ENCODE measurements at regions of chr4 and their contacts with region 1.

Region 1: GRCh38 chr4:55395529-55396307 is at the start of gene TMEM165:
- DNase-seq: peak; percentile 94
- ATAC-seq: peak; percentile 91
- H3K4me3 ChIP-seq: peak within 1 kb of the TSS; percentile 67 to 94 (median 77)
- H3K4me3 Mint-ChIP-seq: peak within 1 kb of the TSS; percentile 97
- H3K27ac ChIP-seq: peak within 1 kb of the TSS; percentile 91 to 93
- H3K27ac Mint-ChIP-seq: peak within 1 kb of the TSS; percentile 97
- H3K4me1 ChIP-seq: peaks cover 28 to 33% of the 10 kb centered on the region in 2 donors
- H3K4me1 Mint-ChIP-seq: peaks cover 39% of the 10 kb centered on the region
- H3K27me3 ChIP-seq: no peaks in the 10 kb centered on the region
- H3K27me3 Mint-ChIP-seq: no peaks in the 10 kb centered on the region
- CTCF ChIP-seq: no peak
- total RNA-seq, gene TMEM165: 110 and 113 TPM in 2 replicates

Region 2: DNA sequence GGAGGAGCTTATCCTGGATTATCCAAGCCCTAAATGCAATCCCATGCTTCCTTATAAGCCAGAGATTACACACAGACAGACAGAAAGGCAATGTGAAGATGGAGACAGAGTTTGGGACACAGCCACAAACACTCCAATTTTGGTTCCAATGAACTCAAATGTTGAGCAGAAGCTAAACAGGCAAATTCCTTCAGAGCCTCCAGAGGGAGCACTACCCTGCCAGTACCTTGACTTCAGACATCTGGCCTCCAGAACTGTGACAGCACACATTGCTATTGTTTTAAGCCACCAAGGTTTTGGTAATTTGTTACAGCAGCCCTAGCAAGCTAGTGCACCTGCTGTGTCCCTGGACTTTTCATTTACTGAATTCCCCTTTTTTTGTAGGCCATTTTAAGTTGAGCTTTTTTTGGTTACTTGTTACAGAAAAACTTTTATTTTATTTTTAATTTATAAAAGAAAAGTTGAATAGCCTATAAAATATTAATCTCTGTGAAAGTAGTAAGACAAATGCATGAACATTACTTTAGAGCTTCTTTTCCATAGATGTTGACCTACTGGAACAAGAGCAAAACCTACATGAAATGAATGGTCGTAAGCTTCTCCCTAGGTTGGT is 83.1 kb before region 1 on chr4:
- CTCF ChIA-PET with region 1: no interaction called
- POLR2A ChIA-PET with region 1: no interaction called
- intact Hi-C with region 1: no loop called
- DNase-seq: peak; percentile 34
- ATAC-seq: peak; percentile 39
- H3K4me3 ChIP-seq: no peak overlapping the region
- H3K4me3 Mint-ChIP-seq: no peak overlapping the region
- H3K27ac ChIP-seq: no peak overlapping the region
- H3K27ac Mint-ChIP-seq: no peak overlapping the region
- H3K4me1 ChIP-seq: no peaks in the 10 kb centered on the region
- H3K4me1 Mint-ChIP-seq: no peaks in the 10 kb centered on the region
- H3K27me3 ChIP-seq: no peaks in the 10 kb centered on the region
- H3K27me3 Mint-ChIP-seq: peaks cover 17% of the 10 kb centered on the region
- CTCF ChIP-seq: peak; percentile 53

Region 3: DNA sequence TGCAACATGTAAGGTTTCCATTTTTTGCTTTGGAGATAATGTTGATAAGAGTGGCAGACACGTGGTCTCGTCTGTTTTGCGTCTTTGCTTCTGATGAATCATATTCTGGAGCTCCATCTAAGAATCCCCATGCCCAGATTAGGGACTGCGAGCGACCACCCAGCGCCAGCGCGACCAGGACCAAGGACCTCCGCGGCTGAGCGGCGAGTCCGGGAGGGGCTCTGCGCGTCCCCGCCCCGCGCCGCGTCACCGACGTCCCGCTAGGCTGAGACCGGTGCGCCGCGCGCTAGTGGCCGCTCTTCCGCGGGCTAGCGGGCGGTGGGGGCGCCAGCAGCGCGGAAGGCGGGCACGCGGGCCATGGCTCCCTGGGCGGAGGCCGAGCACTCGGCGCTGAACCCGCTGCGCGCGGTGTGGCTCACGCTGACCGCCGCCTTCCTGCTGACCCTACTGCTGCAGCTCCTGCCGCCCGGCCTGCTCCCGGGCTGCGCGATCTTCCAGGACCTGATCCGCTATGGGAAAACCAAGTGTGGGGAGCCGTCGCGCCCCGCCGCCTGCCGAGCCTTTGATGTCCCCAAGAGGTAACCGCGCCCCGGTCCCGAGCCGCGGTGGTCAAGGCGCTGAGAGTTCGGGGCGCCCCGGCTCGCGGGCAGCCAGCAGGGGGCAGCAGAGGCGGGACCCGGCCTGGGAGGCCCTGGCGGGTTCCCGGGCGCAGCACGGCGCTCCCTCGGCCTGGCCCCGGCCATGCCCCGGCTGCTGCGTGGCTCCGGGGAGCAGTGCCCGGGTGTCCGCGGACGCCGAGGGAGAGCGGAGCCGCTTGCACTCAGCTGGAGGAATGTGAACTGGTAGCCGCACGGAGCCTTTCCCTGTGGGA is 49.5 kb before region 1 on chr4 and contains the start of gene SRD5A3:
- CTCF ChIA-PET with region 1: interaction called, 29 read pairs
- POLR2A ChIA-PET with region 1: interaction called, 7 read pairs
- intact Hi-C with region 1: loop called (anchors 1 kb)
- DNase-seq: peak; percentile 85
- ATAC-seq: peak; percentile 89
- H3K4me3 ChIP-seq: peak within 1 kb of the TSS; percentile 56 to 84 (median 73)
- H3K4me3 Mint-ChIP-seq: peak within 1 kb of the TSS; percentile 85
- H3K27ac ChIP-seq: peak within 1 kb of the TSS; percentile 69 to 85
- H3K27ac Mint-ChIP-seq: peak within 1 kb of the TSS; percentile 94
- H3K4me1 ChIP-seq: peaks cover 4 to 9% of the 10 kb centered on the region in 2 donors
- H3K4me1 Mint-ChIP-seq: peaks cover 10% of the 10 kb centered on the region
- H3K27me3 ChIP-seq: no peaks in the 10 kb centered on the region
- H3K27me3 Mint-ChIP-seq: no peaks in the 10 kb centered on the region
- CTCF ChIP-seq: peak; percentile 99
- total RNA-seq, gene SRD5A3: 3.6 and 4.0 TPM in 2 replicates

Region 4: DNA sequence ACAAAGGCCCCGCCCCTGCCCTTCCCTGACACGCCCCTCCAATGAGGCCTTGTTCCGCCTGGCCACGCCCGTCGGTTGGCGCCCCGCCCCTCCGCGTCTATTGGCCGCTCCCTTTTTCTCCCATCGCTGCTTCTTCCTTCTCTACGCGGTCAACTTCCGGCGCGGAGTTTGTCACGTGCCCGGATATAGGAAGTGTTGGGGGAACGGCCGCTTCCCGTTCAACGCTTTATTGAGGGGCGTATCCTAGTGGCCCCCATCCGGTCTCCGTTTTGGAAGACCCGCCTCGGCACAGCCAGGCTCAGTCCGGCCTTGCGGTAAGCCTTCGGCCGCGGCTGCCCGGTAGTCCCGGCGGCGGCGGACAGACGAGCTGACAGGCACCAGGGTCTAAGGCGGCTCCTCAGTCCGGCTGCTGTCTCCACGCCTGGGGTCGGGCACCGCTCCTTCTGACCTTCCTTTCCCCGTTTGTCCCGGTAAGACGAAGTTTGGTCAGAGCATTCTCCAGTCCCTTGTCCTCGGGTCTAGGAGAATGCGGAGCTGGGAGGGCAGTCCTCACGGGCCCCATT is 457.8 kb after region 1 on chr4 and contains the start of gene EXOC1:
- CTCF ChIA-PET with region 1: no interaction called
- POLR2A ChIA-PET with region 1: interaction called, 3 read pairs
- intact Hi-C with region 1: loop called (anchors 1 kb)
- DNase-seq: peak; percentile 97
- ATAC-seq: peak; percentile 100
- H3K4me3 ChIP-seq: peak within 1 kb of the TSS; percentile 85 to 98 (median 97)
- H3K4me3 Mint-ChIP-seq: no peak within 1 kb of the TSS
- H3K27ac ChIP-seq: peak within 1 kb of the TSS; percentile 71 to 86
- H3K27ac Mint-ChIP-seq: peak within 1 kb of the TSS; percentile 94
- H3K4me1 ChIP-seq: peaks cover 11 to 12% of the 10 kb centered on the region in 2 donors
- H3K4me1 Mint-ChIP-seq: peaks cover 13% of the 10 kb centered on the region
- H3K27me3 ChIP-seq: peaks cover 0 to 14% (median 2%) of the 10 kb centered on the region in 4 experiments
- H3K27me3 Mint-ChIP-seq: peaks cover 12% of the 10 kb centered on the region
- CTCF ChIP-seq: no peak
- total RNA-seq, gene EXOC1: 42.5 and 46.7 TPM in 2 replicates

Region 5: DNA sequence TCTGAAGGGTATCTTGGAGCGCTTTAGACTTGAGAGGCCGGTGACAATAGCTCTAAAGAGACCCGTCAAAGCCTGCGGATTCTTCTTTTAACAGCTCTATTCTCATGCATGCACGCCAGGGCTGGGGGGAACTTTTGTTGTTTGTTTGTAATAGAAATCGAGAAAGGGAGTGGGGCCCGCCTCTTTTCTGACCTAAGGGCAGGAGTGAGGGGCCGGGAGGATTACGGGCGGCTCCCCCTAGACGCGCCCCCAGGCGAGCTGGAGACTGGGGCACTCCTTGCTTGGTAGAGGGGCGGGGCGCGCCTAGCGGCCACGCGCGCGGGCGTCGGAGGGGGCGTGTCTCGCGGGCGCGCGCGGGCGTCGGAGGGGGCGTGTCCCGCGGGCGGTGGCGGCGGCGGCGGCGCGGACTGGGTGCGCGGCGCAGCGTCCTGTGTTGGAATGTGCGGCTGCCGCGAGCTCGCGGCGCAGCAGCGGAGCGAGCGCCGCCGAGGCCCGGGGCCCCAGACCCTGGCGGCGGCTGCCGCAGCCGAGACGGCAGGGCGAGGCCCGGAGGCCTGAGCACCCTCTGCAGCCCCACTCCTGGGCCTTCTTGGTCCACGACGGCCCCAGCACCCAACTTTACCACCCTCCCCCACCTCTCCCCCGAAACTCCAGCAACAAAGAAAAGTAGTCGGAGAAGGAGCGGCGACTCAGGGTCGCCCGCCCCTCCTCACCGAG is 1511.9 kb after region 1 on chr4 and contains the start of gene REST:
- CTCF ChIA-PET with region 1: no interaction called
- POLR2A ChIA-PET with region 1: no interaction called
- intact Hi-C with region 1: loop called (anchors 5 kb)
- DNase-seq: peak; percentile 92
- ATAC-seq: peak; percentile 65
- H3K4me3 ChIP-seq: peak within 1 kb of the TSS; percentile 62 to 98 (median 88)
- H3K4me3 Mint-ChIP-seq: peak within 1 kb of the TSS; percentile 93
- H3K27ac ChIP-seq: peak within 1 kb of the TSS; percentile 47 to 77
- H3K27ac Mint-ChIP-seq: peak within 1 kb of the TSS; percentile 92
- H3K4me1 ChIP-seq: peaks cover 29 to 35% of the 10 kb centered on the region in 2 donors
- H3K4me1 Mint-ChIP-seq: peaks cover 42% of the 10 kb centered on the region
- H3K27me3 ChIP-seq: no peaks in the 10 kb centered on the region
- H3K27me3 Mint-ChIP-seq: peaks cover 3% of the 10 kb centered on the region
- CTCF ChIP-seq: no peak
- total RNA-seq, gene REST: 59.4 and 61.1 TPM in 2 replicates